T-cell (primary cell): ENCODE measurements at regions of chr14 and their contacts with region 1.

Region 1: GRCh38 chr14:24310646-24311604 is at the start of gene LTB4R:
- DNase-seq: peak; percentile 31 to 84 (median 59)
- ATAC-seq: peak; percentile 86 to 91 (median 88)
- H3K4me3 ChIP-seq: peak within 1 kb of the TSS; percentile 61 to 64
- H3K4me3 Mint-ChIP-seq: peak within 1 kb of the TSS; percentile 74 to 83 (median 77)
- H3K27ac ChIP-seq: peak within 1 kb of the TSS; percentile 77
- H3K27ac Mint-ChIP-seq: peak within 1 kb of the TSS; percentile 94
- H3K4me1 ChIP-seq: peaks cover 39 to 78% of the 10 kb centered on the region in 2 experiments
- H3K4me1 Mint-ChIP-seq: peaks cover 72 to 78% (median 77%) of the 10 kb centered on the region in 3 donors
- H3K27me3 ChIP-seq: no peaks in the 10 kb centered on the region
- H3K27me3 Mint-ChIP-seq: no peaks in the 10 kb centered on the region
- total RNA-seq, gene LTB4R: 17.0 to 29.0 (median 18.0) TPM

Region 2: GRCh38 chr14:24271134-24271833 is 39.6 kb before region 1 on chr14 and contains the start of gene RABGGTA:
- CTCF ChIA-PET with region 1: interaction called in 1 of 2 experiments, 10 read pairs
- POLR2A ChIA-PET with region 1: no interaction called
- DNase-seq: peak; percentile 85 to 98 (median 96)
- ATAC-seq: peak; percentile 87 to 97 (median 95)
- H3K4me3 ChIP-seq: peak within 1 kb of the TSS; percentile 82 to 94
- H3K4me3 Mint-ChIP-seq: peak within 1 kb of the TSS; percentile 84 to 90 (median 90)
- H3K27ac ChIP-seq: peak within 1 kb of the TSS; percentile 96
- H3K27ac Mint-ChIP-seq: peak within 1 kb of the TSS; percentile 95 to 97
- H3K4me1 ChIP-seq: peaks cover 15 to 29% of the 10 kb centered on the region in 2 experiments
- H3K4me1 Mint-ChIP-seq: peaks cover 34 to 51% (median 37%) of the 10 kb centered on the region in 3 donors
- H3K27me3 ChIP-seq: no peaks in the 10 kb centered on the region
- H3K27me3 Mint-ChIP-seq: no peaks in the 10 kb centered on the region
- total RNA-seq, gene RABGGTA: 49.3 to 66.5 (median 62.4) TPM

Region 3: DNA sequence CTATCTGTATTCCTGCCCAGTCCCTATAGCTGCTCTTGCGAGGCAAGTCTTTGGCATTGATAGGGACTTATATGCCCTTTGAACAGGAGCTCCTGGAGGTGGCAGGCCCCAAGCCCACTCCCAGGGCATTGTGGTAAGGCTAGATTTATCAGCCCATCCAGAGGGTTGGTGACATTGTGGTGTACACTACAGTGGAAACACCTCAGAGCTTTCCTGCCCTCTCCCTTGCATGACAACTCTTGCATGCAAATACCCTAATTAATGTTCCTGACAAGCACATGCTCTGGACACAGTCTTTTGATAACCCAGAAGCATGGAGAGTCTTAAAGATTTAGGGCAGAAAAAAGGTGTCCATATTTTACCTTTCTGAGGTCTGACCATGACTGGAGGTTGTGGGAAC is 29.7 kb after region 1 on chr14:
- CTCF ChIA-PET with region 1: interaction called, 5 to 11 read pairs
- POLR2A ChIA-PET with region 1: no interaction called
- DNase-seq: no peak
- ATAC-seq: no peak
- H3K4me3 ChIP-seq: no peak overlapping the region
- H3K4me3 Mint-ChIP-seq: peak overlapping the region in 1 of 3 donors; percentile 84
- H3K27ac ChIP-seq: no peak overlapping the region
- H3K27ac Mint-ChIP-seq: no peak overlapping the region
- H3K4me1 ChIP-seq: peaks cover 6 to 18% of the 10 kb centered on the region in 2 experiments
- H3K4me1 Mint-ChIP-seq: peaks cover 21 to 36% (median 24%) of the 10 kb centered on the region in 3 donors
- H3K27me3 ChIP-seq: peaks cover 0 to 20% of the 10 kb centered on the region in 2 experiments
- H3K27me3 Mint-ChIP-seq: peaks cover 16 to 17% of the 10 kb centered on the region in 2 donors

Region 4: GRCh38 chr14:24411443-24412389 is 100.8 kb after region 1 on chr14:
- CTCF ChIA-PET with region 1: no interaction called
- POLR2A ChIA-PET with region 1: no interaction called
- DNase-seq: peak in 11 of 35 experiments; percentile 16 to 59 (median 29)
- ATAC-seq: peak; percentile 47 to 67 (median 62)
- H3K4me3 ChIP-seq: no peak overlapping the region
- H3K4me3 Mint-ChIP-seq: no peak overlapping the region
- H3K27ac ChIP-seq: no peak overlapping the region
- H3K27ac Mint-ChIP-seq: no peak overlapping the region
- H3K4me1 ChIP-seq: no peaks in the 10 kb centered on the region
- H3K4me1 Mint-ChIP-seq: no peaks in the 10 kb centered on the region
- H3K27me3 ChIP-seq: peaks cover 0 to 50% of the 10 kb centered on the region in 2 experiments
- H3K27me3 Mint-ChIP-seq: peaks cover 0 to 2% of the 10 kb centered on the region in 2 donors